ENCODE measurements at regions of chrX and their contacts with region 1.

Region 1: GRCh38 chrX:56248492-56248891 is 16.3 kb downstream of the KLF8 start:
- DNase-seq: peak; percentile 16
- ATAC-seq: peak; percentile 70
- H3K4me3 Mint-ChIP-seq: no peak overlapping the region
- H3K27ac Mint-ChIP-seq: no peak overlapping the region
- H3K4me1 Mint-ChIP-seq: peaks cover 23% of the 10 kb centered on the region
- H3K27me3 Mint-ChIP-seq: no peaks in the 10 kb centered on the region
- CTCF ChIP-seq: no peak

Region 2: GRCh38 chrX:54891573-54891972 is 1356.9 kb before region 1 on chrX:
- CTCF ChIA-PET with region 1: no interaction called
- POLR2A ChIA-PET with region 1: no interaction called
- intact Hi-C with region 1: loop called (anchors 5 kb)
- DNase-seq: no peak
- ATAC-seq: no peak
- H3K4me3 Mint-ChIP-seq: no peak overlapping the region
- H3K27ac Mint-ChIP-seq: no peak overlapping the region
- H3K4me1 Mint-ChIP-seq: no peaks in the 10 kb centered on the region
- H3K27me3 Mint-ChIP-seq: peaks cover 6% of the 10 kb centered on the region
- CTCF ChIP-seq: no peak

Region 3: DNA sequence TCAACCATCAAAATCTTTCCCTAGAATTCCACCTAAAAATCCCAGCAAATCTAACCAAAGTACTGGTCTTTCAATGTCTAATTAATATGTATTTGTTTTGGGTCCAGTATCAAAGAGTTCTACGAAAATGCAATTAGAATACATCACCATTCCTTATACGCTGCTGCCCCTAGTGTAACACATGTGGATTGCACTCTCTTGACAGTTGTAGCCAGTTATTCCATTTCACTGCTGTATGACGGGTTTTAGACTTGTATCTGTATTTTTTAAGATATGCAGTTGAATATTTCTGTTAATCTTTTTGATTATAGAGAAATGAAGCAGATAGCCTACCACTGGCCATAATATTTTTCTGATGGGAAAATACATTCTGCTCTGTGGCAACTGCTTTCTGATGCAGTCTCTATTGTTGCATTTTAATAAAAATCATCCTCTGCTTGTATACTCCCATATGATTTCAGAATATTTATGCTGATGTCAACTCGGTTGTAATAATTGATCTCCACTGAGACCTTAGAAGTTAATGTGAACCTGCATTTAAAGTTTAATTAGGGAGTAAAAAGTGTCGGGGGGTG is 1190.7 kb before region 1 on chrX:
- CTCF ChIA-PET with region 1: interaction called, 3 read pairs
- POLR2A ChIA-PET with region 1: no interaction called
- intact Hi-C with region 1: loop called (anchors 5 kb)
- DNase-seq: no peak
- ATAC-seq: peak; percentile 54
- H3K4me3 Mint-ChIP-seq: peak overlapping the region; percentile 68
- H3K27ac Mint-ChIP-seq: no peak overlapping the region
- H3K4me1 Mint-ChIP-seq: peaks cover 11% of the 10 kb centered on the region
- H3K27me3 Mint-ChIP-seq: no peaks in the 10 kb centered on the region
- CTCF ChIP-seq: peak; percentile 18

Region 4: GRCh38 chrX:55135171-55135570 is 1113.3 kb before region 1 on chrX:
- CTCF ChIA-PET with region 1: interaction called, 7 read pairs
- POLR2A ChIA-PET with region 1: no interaction called
- intact Hi-C with region 1: loop called (anchors 2 kb)
- DNase-seq: peak; percentile 10
- ATAC-seq: peak; percentile 42
- H3K4me3 Mint-ChIP-seq: no peak overlapping the region
- H3K27ac Mint-ChIP-seq: no peak overlapping the region
- H3K4me1 Mint-ChIP-seq: no peaks in the 10 kb centered on the region
- H3K27me3 Mint-ChIP-seq: no peaks in the 10 kb centered on the region
- CTCF ChIP-seq: no peak

Region 5: DNA sequence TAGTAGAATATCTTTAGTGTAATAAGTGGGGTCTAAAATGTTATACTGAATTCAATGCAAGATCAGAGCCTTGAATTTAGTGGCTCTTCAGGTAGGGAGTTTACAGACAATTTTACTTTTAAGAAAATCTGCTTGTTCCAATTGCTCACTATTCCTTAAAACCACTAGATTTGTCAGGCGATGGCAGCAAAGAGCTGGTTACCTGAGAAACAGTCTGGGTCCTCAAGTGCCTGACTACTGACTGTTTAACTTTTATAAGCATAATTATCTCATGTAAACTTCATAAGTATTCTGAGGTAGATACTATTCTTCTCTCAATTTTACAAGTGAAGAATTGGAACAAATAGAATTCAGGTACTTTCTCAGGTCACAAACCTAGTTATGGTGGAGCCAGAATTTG is 446.7 kb before region 1 on chrX:
- CTCF ChIA-PET with region 1: interaction called, 5 read pairs
- POLR2A ChIA-PET with region 1: no interaction called
- intact Hi-C with region 1: loop called (anchors 1 kb)
- DNase-seq: no peak
- ATAC-seq: no peak
- H3K4me3 Mint-ChIP-seq: no peak overlapping the region
- H3K27ac Mint-ChIP-seq: no peak overlapping the region
- H3K4me1 Mint-ChIP-seq: peaks cover 6% of the 10 kb centered on the region
- H3K27me3 Mint-ChIP-seq: no peaks in the 10 kb centered on the region
- CTCF ChIP-seq: no peak

Region 6: DNA sequence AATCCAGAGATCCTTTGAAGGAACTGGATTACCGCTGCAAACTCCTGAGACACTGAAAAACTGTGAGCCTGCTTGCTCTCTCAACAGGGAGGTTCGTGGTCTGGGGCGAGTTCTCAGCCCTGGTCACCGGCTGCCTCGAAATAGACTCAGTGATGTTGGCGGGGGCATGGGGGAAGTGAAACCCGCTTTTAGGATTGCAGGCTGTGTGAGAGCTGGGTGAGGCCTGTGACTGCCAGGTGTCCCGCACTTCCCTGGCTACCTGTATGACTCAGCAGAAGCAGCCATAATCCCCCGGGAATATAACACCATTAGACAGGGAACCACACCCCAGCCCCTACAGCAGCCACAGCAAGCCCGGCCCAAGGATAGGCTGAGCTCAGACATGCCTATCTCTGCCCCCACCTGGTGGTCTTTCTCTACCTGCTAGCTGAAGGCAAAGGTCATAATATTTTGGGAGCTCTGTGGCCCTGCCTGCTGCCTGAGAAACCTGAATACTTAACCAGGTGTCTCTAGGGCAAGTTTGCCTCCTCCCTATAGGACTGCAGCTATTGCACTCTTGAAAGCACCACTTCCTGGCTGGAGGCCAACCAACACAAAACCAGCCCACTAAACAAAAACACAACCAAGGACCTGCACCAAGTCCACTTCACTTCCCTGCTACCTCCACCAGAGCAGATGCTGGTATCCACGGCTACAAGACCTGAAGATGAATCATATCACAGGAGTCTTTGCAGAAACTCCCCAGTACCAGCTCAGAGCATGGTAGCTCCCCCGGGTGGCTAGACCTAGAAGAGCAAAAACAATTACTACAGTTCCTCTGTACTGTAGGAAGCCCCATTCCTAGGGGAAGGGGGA is 328.9 kb before region 1 on chrX:
- CTCF ChIA-PET with region 1: interaction called, 4 read pairs
- POLR2A ChIA-PET with region 1: no interaction called
- intact Hi-C with region 1: loop called (anchors 1 kb)
- DNase-seq: peak; percentile 50
- ATAC-seq: peak; percentile 88
- H3K4me3 Mint-ChIP-seq: peak overlapping the region; percentile 52
- H3K27ac Mint-ChIP-seq: peak overlapping the region; percentile 79
- H3K4me1 Mint-ChIP-seq: peaks cover 38% of the 10 kb centered on the region
- H3K27me3 Mint-ChIP-seq: no peaks in the 10 kb centered on the region
- CTCF ChIP-seq: no peak

Region 7: GRCh38 chrX:56219700-56220099 is 28.8 kb before region 1 on chrX:
- CTCF ChIA-PET with region 1: no interaction called
- POLR2A ChIA-PET with region 1: no interaction called
- intact Hi-C with region 1: loop called (anchors 2 kb)
- DNase-seq: no peak
- ATAC-seq: no peak
- H3K4me3 Mint-ChIP-seq: no peak overlapping the region
- H3K27ac Mint-ChIP-seq: no peak overlapping the region
- H3K4me1 Mint-ChIP-seq: peaks cover 3% of the 10 kb centered on the region
- H3K27me3 Mint-ChIP-seq: no peaks in the 10 kb centered on the region
- CTCF ChIP-seq: no peak

Measured in activated B cell treated with CpG ODN at 0.5 μM for 24 hours (primary cell).